ENCODE measurements at regions of chr3 and their contacts with region 1.

Region 1: DNA sequence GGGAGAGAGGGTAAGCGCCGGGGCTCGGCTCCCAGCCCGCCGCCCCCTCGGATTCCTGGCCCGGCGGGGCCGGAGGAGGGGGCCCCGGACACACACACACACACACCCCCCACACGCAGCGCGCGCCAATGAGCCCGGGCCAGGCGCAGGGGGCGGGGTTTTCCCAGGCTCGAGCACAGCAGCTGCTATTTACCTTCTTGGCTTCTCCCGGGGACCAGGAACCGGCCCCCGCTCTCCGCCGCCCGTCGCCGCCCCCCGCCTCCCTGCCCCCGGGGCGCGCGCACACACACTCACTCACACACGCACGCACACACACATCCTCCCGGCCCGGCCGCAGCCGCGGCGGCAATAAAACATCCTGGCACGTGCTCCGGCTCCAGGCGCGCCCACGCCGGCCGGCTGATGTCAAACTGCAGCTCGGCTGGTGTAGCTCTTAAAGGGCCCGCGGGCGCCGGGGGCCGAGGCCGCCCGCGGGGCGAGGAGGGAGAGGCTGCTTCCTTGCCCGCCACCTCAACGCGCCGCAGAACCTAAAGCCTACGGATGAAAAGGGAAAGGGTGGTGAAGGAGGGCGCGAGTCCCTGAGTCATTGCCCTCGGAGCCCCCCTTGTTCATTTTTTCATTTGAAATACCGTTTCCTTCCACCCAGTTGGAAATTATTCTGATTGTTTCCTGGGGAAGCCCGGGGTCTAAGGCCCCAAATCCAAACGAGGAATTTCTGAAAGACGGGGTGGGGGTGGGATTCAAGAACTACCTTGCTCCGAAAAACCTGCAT is 1.0 kb upstream of the HES1 start:
- DNase-seq: peak; percentile 80
- H3K4me3 Mint-ChIP-seq: peak overlapping the region; percentile 84
- H3K27ac Mint-ChIP-seq: peak overlapping the region; percentile 90
- H3K4me1 Mint-ChIP-seq: peaks cover 82% of the 10 kb centered on the region
- H3K27me3 Mint-ChIP-seq: peaks cover 67% of the 10 kb centered on the region

Region 2: GRCh38 chr3:192899540-192899982 is 1235.4 kb before region 1 on chr3:
- intact Hi-C with region 1: loop called (anchors 5 kb)
- DNase-seq: no peak
- H3K4me3 Mint-ChIP-seq: peak overlapping the region; percentile 41
- H3K27ac Mint-ChIP-seq: peak overlapping the region; percentile 79
- H3K4me1 Mint-ChIP-seq: peaks cover 74% of the 10 kb centered on the region
- H3K27me3 Mint-ChIP-seq: no peaks in the 10 kb centered on the region

Region 3: DNA sequence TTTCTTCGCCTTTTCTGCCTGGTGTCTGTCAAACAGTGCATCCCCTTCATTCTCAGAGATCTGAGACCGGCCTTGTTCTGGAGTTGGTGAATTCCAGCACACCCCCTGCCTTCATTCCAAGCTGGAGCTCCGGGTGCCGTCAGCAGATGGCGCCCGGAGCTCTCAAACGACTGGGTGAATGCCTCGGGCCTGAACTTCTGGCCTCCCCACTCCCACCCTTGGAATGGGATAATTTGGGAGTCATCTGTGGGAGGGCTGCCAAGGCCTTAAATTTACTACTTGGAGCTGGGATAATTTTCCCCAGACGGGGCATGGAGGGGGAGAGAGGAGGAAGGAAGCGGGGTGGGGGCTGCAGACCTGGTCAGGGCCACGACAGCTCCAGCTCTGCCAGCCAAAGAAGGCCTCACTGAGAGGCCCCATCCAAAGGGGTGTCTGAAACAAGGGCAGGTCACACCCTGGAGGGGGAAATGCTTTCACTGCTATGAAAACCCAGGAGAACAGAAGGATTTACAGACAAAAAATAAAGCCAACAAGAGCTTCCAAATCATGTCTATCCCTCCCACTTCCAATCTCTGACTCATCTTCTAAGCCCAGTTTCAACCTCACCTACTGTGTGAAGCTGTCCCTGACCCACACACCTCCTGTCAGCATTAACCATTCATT is 354.0 kb before region 1 on chr3:
- intact Hi-C with region 1: loop called (anchors 2 kb)
- DNase-seq: no peak
- H3K4me3 Mint-ChIP-seq: no peak overlapping the region
- H3K27ac Mint-ChIP-seq: no peak overlapping the region
- H3K4me1 Mint-ChIP-seq: peaks cover 35% of the 10 kb centered on the region
- H3K27me3 Mint-ChIP-seq: peaks cover 49% of the 10 kb centered on the region

Region 4: DNA sequence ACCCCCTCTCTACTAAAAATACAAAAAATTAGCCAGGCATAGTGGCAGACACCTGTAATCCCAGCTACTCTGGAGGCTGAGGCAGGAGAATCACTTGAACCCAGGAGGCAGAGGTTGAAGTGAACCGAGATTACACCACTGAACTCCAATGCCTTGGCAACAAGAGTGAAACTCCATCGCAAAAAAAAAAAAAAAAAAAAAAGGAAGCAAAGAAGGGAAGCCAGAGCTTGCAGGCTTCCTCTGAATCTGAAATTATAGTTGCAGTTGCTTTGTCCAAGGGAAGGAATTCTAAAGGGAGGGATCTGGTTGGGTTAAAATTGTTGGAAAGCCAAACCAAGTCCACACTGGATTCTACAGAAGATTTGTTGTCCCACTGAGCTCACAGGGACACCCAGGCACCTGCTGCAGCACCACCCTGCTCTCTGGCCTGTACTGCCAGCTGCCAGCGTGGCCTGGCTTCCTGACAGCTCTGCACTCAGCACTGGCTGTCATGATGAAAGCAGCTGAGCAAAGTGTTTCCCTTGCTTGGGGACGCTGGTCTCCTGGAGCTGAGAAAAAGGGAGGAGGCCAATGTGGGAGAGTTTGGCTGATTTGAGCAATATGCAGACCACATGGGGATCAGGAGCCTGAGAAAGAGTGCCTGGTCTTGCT is 87.8 kb before region 1 on chr3:
- intact Hi-C with region 1: no loop called
- DNase-seq: no peak
- H3K4me3 Mint-ChIP-seq: no peak overlapping the region
- H3K27ac Mint-ChIP-seq: no peak overlapping the region
- H3K4me1 Mint-ChIP-seq: peaks cover 9% of the 10 kb centered on the region
- H3K27me3 Mint-ChIP-seq: peaks cover 11% of the 10 kb centered on the region

Region 5: DNA sequence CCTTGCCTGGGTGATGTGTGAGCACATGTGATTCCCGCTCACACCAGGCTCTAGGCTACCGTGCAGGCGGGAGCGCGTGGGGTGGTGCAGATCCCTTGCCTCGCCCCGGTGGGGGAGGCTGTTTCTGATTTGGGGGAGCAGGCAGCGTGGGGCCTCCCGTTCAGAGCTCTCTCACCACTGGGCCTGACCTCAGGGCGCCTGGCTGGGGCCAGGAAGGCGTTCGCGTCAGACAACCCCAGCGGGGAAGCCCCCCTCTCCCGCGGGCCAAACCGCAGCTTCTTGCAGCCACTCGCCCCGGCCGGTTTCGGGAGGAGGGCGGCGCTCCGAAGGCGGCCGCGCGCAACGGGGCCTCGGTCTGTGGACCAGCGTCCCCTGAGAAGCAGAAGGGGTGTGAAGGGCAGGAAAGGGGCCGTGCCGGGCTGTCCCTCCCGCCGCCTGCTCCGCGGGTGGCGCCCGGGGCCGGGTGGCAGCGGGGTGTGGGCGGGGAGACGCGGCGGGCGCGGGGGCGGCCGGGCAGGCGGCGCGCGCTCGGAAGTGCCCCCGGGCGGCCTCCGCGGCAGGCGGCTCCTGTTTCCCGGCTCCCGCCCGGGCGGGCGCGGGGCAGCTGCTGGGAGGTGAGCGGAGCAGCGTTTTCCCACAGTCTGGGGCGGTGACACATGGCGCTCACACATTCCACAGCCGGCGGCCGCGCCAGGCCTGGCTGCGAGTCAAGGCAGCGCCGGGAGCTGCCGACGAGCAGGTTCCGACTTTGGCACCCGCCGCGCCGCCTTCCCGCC is 64.1 kb before region 1 on chr3:
- intact Hi-C with region 1: loop called (anchors 1 kb)
- DNase-seq: peak; percentile 65
- H3K4me3 Mint-ChIP-seq: peak overlapping the region; percentile 46
- H3K27ac Mint-ChIP-seq: no peak overlapping the region
- H3K4me1 Mint-ChIP-seq: peaks cover 38% of the 10 kb centered on the region
- H3K27me3 Mint-ChIP-seq: peaks cover 60% of the 10 kb centered on the region

Region 6: GRCh38 chr3:194306109-194306686 is 171.3 kb after region 1 on chr3:
- intact Hi-C with region 1: loop called (anchors 1 kb)
- DNase-seq: peak; percentile 65
- H3K4me3 Mint-ChIP-seq: peak overlapping the region; percentile 69
- H3K27ac Mint-ChIP-seq: peak overlapping the region; percentile 82
- H3K4me1 Mint-ChIP-seq: peaks cover 63% of the 10 kb centered on the region
- H3K27me3 Mint-ChIP-seq: peaks cover 2% of the 10 kb centered on the region

Region 7: GRCh38 chr3:194486540-194487288 is 351.8 kb after region 1 on chr3 and contains the start of gene ATP13A3:
- intact Hi-C with region 1: loop called (anchors 10 kb)
- DNase-seq: peak; percentile 87
- H3K4me3 Mint-ChIP-seq: peak within 1 kb of the TSS; percentile 96
- H3K27ac Mint-ChIP-seq: peak within 1 kb of the TSS; percentile 95
- H3K4me1 Mint-ChIP-seq: peaks cover 55% of the 10 kb centered on the region
- H3K27me3 Mint-ChIP-seq: peaks cover 1% of the 10 kb centered on the region
- total RNA-seq, gene ATP13A3: 198 and 206 TPM in 2 replicates

Measured in activated T-helper 1 cell treated with anti-CD3 and anti-CD28 coated beads, Interleukin-12 subunit alpha, Interleukin-12 subunit beta, Interleukin-2, Interleukin-4 antibody, amounts not matched to agents 30 ng/mL and 10 ng/mL and 1 ng/mL, durations not matched to agents 14 hours and 24 hours and 36 hours (primary cell).